Common myeloid progenitor, CD34-positive (primary cell): ENCODE measurements at regions of chr3 and their contacts with region 1.

Region 1: DNA sequence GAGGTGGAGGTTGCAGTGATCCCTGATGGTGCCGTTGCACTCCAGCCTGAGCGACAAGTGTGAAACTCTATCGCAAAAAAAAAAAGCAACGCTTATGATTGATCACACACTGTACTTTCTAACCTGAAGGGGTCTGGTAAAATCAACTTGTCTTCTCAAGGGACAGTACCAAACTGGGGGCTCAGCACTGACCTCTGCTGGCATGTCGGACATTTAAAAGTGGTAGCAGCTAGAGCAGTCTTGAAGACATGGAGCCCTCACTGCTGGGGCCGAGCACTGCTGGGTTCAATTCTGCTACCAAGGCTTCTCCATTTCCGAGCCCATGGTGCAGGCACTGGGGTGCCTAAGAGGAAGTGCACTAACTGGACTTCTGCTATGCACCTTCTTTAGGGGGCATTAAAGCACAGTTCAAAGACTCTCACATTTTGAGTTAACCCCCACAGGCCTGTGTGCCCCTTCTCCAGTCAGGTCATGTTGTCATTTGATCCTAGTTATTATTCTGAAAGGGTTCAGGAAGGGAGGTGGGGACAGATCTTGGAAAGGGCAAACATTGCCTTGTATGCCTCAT is 26.4 kb upstream of the LAMP3 start:
- DNase-seq: peak; percentile 69 to 77 (median 74)
- H3K4me3 ChIP-seq: no peak overlapping the region
- H3K27ac ChIP-seq: no peak overlapping the region
- H3K4me1 ChIP-seq: peaks cover 7 to 12% (median 10%) of the 10 kb centered on the region in 4 experiments
- H3K27me3 ChIP-seq: no peaks in the 10 kb centered on the region

Region 2: DNA sequence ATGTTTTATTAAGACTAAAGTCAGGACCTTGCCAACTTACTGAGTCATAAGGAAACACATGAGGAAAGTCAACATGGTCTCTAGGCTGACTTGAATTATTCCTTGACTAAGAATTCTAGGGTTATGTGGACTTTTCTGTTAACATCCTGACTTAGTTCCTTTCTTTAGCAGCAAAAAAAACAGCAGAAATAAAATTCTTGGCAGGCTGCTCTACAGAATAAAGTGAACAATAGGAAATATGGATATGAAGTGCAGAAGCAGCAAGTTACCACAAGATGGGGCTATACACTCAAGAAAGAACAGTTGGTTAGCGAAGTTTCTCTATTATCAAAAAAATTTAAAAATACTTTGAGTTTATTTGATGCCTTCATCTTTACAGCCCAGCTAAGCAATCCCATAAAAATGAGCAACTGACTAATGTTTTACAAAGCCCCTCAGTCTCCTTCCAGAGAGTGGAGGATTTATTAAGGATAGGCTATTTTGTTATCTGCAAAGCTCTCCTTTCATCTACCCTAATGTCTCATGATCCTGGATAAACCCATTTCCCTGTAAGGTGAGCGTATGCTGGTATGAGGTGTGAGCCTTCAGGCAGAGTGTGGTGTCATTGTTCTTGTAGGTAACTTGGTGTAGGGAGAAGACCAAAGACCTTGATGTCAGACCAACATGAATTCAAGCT is 66.6 kb before region 1 on chr3:
- CTCF ChIA-PET with region 1: interaction called, 64 read pairs
- POLR2A ChIA-PET with region 1: no interaction called
- DNase-seq: peak; percentile 58 to 82 (median 75)
- H3K4me3 ChIP-seq: no peak overlapping the region
- H3K27ac ChIP-seq: no peak overlapping the region
- H3K4me1 ChIP-seq: no peaks in the 10 kb centered on the region
- H3K27me3 ChIP-seq: no peaks in the 10 kb centered on the region

Region 3: GRCh38 chr3:183212565-183212964 is 23.6 kb after region 1 on chr3:
- CTCF ChIA-PET with region 1: interaction called, 27 read pairs
- POLR2A ChIA-PET with region 1: interaction called, 4 read pairs
- DNase-seq: peak; percentile 94 to 99 (median 98)
- H3K4me3 ChIP-seq: peak overlapping the region in 3 of 7 experiments; percentile 12 to 30 (median 24)
- H3K27ac ChIP-seq: peak overlapping the region; percentile 56 to 84
- H3K4me1 ChIP-seq: peaks cover 21 to 54% (median 45%) of the 10 kb centered on the region in 4 experiments
- H3K27me3 ChIP-seq: no peaks in the 10 kb centered on the region

Region 4: DNA sequence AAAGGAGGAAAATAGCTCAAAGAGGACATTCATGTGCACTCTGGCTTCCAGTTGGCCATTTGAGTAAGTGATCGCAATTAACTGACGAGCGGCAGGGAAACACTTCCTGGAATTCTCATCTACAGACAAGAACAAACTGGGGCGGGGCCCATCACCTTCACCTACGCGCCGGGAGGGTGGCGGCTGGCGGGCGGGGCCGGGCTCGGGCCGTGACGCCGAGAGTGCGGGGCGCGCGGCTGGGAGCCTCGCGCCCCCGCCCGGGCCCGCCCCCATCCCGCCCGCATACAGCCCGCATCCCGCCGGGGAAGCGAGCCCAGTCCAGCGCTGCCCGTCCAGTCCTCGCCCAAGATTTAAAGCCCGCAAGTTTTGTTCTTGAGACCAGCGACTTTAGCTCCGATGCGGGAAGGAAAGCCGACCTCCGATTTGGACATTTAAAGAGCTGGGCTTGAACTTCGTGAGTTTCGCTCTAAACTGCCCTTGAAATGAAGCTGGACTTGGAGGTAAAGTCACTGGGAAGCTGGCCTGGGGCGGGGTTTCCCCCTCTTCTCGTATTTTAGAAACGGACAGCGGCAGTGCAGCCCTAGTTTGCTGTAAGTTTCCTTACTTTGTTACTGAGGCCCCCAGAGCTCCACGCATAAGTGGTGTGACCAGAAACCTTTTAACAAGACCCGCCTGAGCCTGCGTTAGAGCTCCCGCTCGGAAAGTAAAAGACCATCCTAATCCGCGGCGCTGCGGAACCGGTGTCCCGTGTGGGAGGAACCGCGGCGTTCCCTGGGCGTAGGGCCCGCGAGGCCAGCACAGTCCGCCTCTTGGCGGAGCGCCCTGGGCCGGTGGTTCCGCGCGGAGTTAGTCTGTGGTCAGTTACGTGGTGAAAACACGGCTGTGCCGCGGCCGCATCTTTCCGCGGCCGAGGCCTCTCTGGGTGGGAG is 64.3 kb after region 1 on chr3 and contains the start of gene B3GNT5:
- CTCF ChIA-PET with region 1: interaction called, 24 read pairs
- POLR2A ChIA-PET with region 1: no interaction called
- DNase-seq: peak in 2 of 3 donors; percentile 48 to 64
- H3K4me3 ChIP-seq: peak within 1 kb of the TSS; percentile 70 to 97 (median 87)
- H3K27ac ChIP-seq: peak within 1 kb of the TSS; percentile 73 to 88
- H3K4me1 ChIP-seq: peaks cover 6 to 42% (median 18%) of the 10 kb centered on the region in 4 experiments
- H3K27me3 ChIP-seq: no peaks in the 10 kb centered on the region

Region 5: GRCh38 chr3:183260167-183260904 is 71.4 kb after region 1 on chr3:
- CTCF ChIA-PET with region 1: interaction called, 10 read pairs
- POLR2A ChIA-PET with region 1: no interaction called
- DNase-seq: peak in 2 of 3 donors; percentile 82 to 87
- H3K4me3 ChIP-seq: peak overlapping the region in 3 of 7 experiments; percentile 22 to 41 (median 28)
- H3K27ac ChIP-seq: peak overlapping the region in 1 of 2 experiments; percentile 71
- H3K4me1 ChIP-seq: peaks cover 20 to 68% (median 46%) of the 10 kb centered on the region in 4 experiments
- H3K27me3 ChIP-seq: no peaks in the 10 kb centered on the region

Region 6: DNA sequence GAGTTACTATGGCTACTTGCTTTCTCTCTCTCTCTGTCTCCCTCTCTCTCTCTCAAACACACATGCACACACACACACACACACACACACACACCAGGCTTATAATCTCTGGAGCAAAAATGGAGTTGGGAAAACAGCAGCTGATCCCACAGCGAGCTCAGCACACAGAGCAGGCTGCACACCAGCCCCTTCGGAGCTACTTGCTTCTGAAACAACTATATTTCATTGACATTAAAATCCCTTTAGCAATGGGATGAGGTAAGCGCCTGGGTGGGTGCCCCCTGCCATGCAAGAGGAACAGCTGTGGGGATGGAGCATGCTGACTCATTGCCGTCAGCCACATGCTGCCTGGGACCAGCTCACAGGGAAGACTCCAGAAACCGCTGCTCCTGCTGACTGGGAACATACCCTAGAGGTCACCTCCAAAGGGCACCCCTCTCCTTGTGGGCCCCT is 109.7 kb after region 1 on chr3:
- CTCF ChIA-PET with region 1: interaction called, 10 read pairs
- POLR2A ChIA-PET with region 1: no interaction called
- DNase-seq: peak; percentile 72 to 88 (median 85)
- H3K4me3 ChIP-seq: no peak overlapping the region
- H3K27ac ChIP-seq: no peak overlapping the region
- H3K4me1 ChIP-seq: peaks cover 6 to 30% (median 12%) of the 10 kb centered on the region in 4 experiments
- H3K27me3 ChIP-seq: no peaks in the 10 kb centered on the region

Region 7: GRCh38 chr3:183392186-183393034 is 203.4 kb after region 1 on chr3:
- CTCF ChIA-PET with region 1: interaction called, 43 read pairs
- POLR2A ChIA-PET with region 1: no interaction called
- DNase-seq: no peak
- H3K4me3 ChIP-seq: no peak overlapping the region
- H3K27ac ChIP-seq: no peak overlapping the region
- H3K4me1 ChIP-seq: peaks cover 3 to 9% (median 5%) of the 10 kb centered on the region in 4 experiments
- H3K27me3 ChIP-seq: no peaks in the 10 kb centered on the region